ENCODE measurements at regions of chr11 and their contacts with region 1.

Region 1: GRCh38 chr11:22730319-22730718 is 63.9 kb downstream of the GAS2 start:
- DNase-seq: peak in 4 of 14 experiments; percentile 10 to 49 (median 36)
- ATAC-seq: no peak
- H3K4me3 ChIP-seq: no peak overlapping the region
- H3K4me3 Mint-ChIP-seq: no peak overlapping the region
- H3K27ac ChIP-seq: no peak overlapping the region
- H3K27ac Mint-ChIP-seq: no peak overlapping the region
- H3K4me1 ChIP-seq: no peaks in the 10 kb centered on the region
- H3K4me1 Mint-ChIP-seq: no peaks in the 10 kb centered on the region
- H3K27me3 ChIP-seq: no peaks in the 10 kb centered on the region
- H3K27me3 Mint-ChIP-seq: no peaks in the 10 kb centered on the region
- CTCF ChIP-seq: peak; percentile 52

Region 2: DNA sequence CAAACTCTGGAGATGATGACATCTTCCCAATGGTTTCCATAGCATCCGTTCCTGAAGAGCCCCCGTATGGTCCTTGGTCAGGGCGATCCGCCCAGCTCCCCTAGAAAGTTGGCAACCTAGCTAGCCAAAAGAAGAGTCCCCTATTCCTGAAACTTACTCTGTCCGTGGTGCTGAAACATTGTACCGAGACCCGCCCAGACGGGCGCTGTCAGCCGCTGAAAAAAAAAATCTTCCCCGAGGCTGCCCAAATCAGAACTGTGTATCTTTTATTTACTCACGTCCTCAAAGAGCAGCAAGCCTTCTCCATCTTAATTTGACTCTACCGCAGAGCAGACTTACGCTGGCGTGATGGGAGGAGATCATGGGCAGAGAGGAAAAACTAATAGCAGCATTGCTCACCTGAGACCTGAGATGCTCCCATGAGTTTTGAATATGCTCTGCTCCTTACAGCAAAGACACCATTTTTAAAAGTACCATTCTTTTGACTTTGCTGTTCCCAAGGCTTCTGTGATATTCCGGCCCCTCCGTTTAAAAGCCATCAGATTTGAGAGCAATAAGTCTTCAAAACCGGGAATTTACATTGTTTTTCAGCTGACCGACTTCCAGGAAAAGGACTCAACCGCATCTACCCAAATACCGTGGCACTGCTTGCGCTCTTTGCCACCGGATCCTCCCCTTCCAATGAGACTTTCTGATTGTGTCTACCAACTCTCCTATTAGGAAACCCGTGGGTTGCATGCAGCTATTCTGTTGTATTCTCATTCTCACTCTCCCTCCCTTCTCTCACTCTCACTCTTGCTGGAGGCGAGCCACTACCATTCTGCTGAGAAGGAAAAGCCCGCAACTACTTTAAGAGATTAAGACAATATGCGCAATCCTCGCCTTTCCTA is 392.5 kb before region 1 on chr11 and contains the start of gene SLC17A6:
- CTCF ChIA-PET with region 1: no interaction called
- POLR2A ChIA-PET with region 1: no interaction called
- intact Hi-C with region 1: loop called (anchors 1 to 5 kb)
- DNase-seq: peak in 2 of 14 experiments; percentile 11 to 17
- ATAC-seq: peak; percentile 26
- H3K4me3 ChIP-seq: no peak within 1 kb of the TSS
- H3K4me3 Mint-ChIP-seq: no peak within 1 kb of the TSS
- H3K27ac ChIP-seq: no peak within 1 kb of the TSS
- H3K27ac Mint-ChIP-seq: no peak within 1 kb of the TSS
- H3K4me1 ChIP-seq: no peaks in the 10 kb centered on the region
- H3K4me1 Mint-ChIP-seq: peaks cover 17% of the 10 kb centered on the region
- H3K27me3 ChIP-seq: peaks cover 54 to 63% of the 10 kb centered on the region in 2 experiments
- H3K27me3 Mint-ChIP-seq: peaks cover 74% of the 10 kb centered on the region
- CTCF ChIP-seq: no peak
- total RNA-seq, gene SLC17A6: not detected

Region 3: GRCh38 chr11:22670830-22671229 is 59.5 kb before region 1 on chr11:
- CTCF ChIA-PET with region 1: no interaction called
- POLR2A ChIA-PET with region 1: no interaction called
- intact Hi-C with region 1: loop called (anchors 1 to 2 kb)
- DNase-seq: peak in 2 of 14 experiments; percentile 20 to 22
- ATAC-seq: peak; percentile 54
- H3K4me3 ChIP-seq: no peak overlapping the region
- H3K4me3 Mint-ChIP-seq: no peak overlapping the region
- H3K27ac ChIP-seq: no peak overlapping the region
- H3K27ac Mint-ChIP-seq: no peak overlapping the region
- H3K4me1 ChIP-seq: peaks cover 10% of the 10 kb centered on the region
- H3K4me1 Mint-ChIP-seq: peaks cover 15% of the 10 kb centered on the region
- H3K27me3 ChIP-seq: peaks cover 24 to 44% of the 10 kb centered on the region in 2 experiments
- H3K27me3 Mint-ChIP-seq: peaks cover 58% of the 10 kb centered on the region
- CTCF ChIP-seq: peak; percentile 18